H1 (cell line): ENCODE measurements at regions of chr20 and their contacts with region 1.

Region 1: GRCh38 chr20:40442181-40442963 is 246.7 kb downstream of the MAFB start:
- DNase-seq: no peak
- H3K4me3 ChIP-seq: no peak overlapping the region
- H3K27ac ChIP-seq: no peak overlapping the region
- H3K4me1 ChIP-seq: peaks cover 0 to 3% (median 0%) of the 10 kb centered on the region in 4 experiments; a peak in 2 of 7 replicates
- H3K27me3 ChIP-seq: no peaks in the 10 kb centered on the region
- CTCF ChIP-seq: peak; percentile 21 to 41 (median 31); a peak in 2 of 4 replicates
- EP300 ChIP-seq: no peak
- POLR2A ChIP-seq: no peak
- RAD21 ChIP-seq: peak; percentile 19 to 53

Region 2: DNA sequence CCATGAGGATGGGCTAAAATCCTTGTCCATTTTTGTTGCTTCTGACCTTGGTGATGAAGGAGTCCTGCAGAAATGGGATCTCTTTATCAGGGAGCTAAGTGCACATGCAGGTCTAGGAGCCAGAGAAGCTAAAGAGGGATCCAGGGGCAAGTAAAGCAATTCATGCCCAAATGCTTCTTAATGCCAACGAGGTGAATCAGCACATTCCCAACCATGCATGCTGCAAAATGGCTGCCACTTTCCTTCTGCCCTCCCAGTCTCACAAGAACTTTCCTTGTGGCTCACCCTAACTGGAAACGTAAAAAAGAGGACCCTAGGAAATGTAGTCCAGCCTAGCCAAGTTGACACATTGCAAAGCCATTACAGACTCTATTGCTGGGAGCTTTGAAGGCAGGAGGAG is 51.7 kb before region 1 on chr20:
- CTCF ChIA-PET with region 1: no interaction called
- POLR2A ChIA-PET with region 1: no interaction called
- DNase-seq: peak in 1 of 2 experiments; percentile 21
- H3K4me3 ChIP-seq: no peak overlapping the region
- H3K27ac ChIP-seq: no peak overlapping the region
- H3K4me1 ChIP-seq: no peaks in the 10 kb centered on the region
- H3K27me3 ChIP-seq: no peaks in the 10 kb centered on the region
- CTCF ChIP-seq: no peak
- EP300 ChIP-seq: no peak
- POLR2A ChIP-seq: no peak
- RAD21 ChIP-seq: no peak

Region 3: DNA sequence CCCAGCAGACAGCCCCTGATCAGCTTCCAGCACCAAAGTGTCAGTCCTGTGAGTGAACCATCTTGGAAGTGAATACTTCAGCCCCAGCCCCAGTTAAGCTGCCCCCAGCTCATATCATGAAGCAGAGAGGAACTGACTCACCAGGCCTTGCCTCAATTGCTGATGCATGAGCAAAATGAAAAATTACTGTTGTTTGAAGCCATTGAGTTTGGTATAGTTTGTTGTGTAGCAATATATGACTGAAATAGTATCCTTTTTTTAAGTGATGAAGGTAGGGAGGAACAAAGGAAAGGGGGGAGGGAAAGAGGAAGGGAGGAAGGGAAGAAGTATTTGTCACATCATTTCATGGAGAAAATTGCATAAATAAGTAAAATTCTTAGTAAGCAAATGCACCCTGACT is 19.7 kb before region 1 on chr20:
- CTCF ChIA-PET with region 1: interaction called, 11 read pairs
- POLR2A ChIA-PET with region 1: no interaction called
- DNase-seq: no peak
- H3K4me3 ChIP-seq: no peak overlapping the region
- H3K27ac ChIP-seq: no peak overlapping the region
- H3K4me1 ChIP-seq: no peaks in the 10 kb centered on the region
- H3K27me3 ChIP-seq: peaks cover 0 to 1% (median 0%) of the 10 kb centered on the region in 4 experiments; a peak in 1 of 7 replicates
- CTCF ChIP-seq: no peak
- EP300 ChIP-seq: no peak
- POLR2A ChIP-seq: no peak
- RAD21 ChIP-seq: no peak